Dendritic cell treated with granulocyte-macrophage colony-stimulating factor and Interleukin-4, amounts not matched to agents 40 ng/mL and 50 ng/mL, for 4 days (primary cell): ENCODE measurements at regions of chr6 and their contacts with region 1.

Region 1: GRCh38 chr6:32387589-32388340 is 16.1 kb upstream of the TSBP1 start:
- H3K4me3 Mint-ChIP-seq: no peak overlapping the region
- H3K27ac Mint-ChIP-seq: no peak overlapping the region
- H3K4me1 Mint-ChIP-seq: peaks cover 3% of the 10 kb centered on the region
- H3K27me3 Mint-ChIP-seq: peaks cover 29% of the 10 kb centered on the region

Region 2: DNA sequence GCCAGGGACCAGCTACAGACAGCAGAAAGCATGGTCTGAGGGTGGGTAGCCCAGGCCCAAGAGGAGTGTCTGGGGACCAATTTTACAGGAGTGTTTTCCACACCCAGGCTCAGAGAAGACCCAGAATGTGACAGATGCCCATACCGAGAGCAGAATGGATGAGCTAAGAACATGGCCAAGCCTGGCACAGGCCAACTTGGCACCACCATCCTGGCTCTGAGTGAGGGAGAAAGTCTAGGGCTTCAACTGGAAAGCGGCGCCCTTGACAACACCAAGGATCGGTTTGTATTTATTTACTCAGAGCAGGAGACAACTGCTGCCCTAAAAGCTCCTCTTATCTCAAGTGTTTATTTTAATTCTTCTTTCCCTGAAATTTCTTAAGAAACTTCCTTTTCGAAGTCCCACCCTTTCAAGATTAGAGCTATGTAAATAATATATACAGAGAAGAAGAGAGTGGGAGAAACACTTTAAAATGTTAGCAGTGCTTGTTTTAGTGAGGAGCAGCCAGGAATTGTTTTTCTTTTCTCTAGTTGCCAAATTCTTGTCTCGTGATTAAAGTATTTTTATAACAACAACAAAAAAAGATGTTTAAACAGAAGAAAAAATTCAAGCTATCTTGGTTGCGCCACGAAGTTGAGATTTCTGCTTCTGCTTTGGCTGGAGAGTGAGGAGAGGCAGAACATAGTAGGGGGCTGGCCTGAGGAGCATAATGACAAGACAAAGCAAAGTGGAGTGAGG is 294.8 kb before region 1 on chr6:
- intact Hi-C with region 1: loop called (anchors 10 kb)
- H3K4me3 Mint-ChIP-seq: no peak overlapping the region
- H3K27ac Mint-ChIP-seq: no peak overlapping the region
- H3K4me1 Mint-ChIP-seq: peaks cover 11% of the 10 kb centered on the region
- H3K27me3 Mint-ChIP-seq: peaks cover 92% of the 10 kb centered on the region